ENCODE measurements at regions of chr1 and their contacts with region 1.

Region 1: DNA sequence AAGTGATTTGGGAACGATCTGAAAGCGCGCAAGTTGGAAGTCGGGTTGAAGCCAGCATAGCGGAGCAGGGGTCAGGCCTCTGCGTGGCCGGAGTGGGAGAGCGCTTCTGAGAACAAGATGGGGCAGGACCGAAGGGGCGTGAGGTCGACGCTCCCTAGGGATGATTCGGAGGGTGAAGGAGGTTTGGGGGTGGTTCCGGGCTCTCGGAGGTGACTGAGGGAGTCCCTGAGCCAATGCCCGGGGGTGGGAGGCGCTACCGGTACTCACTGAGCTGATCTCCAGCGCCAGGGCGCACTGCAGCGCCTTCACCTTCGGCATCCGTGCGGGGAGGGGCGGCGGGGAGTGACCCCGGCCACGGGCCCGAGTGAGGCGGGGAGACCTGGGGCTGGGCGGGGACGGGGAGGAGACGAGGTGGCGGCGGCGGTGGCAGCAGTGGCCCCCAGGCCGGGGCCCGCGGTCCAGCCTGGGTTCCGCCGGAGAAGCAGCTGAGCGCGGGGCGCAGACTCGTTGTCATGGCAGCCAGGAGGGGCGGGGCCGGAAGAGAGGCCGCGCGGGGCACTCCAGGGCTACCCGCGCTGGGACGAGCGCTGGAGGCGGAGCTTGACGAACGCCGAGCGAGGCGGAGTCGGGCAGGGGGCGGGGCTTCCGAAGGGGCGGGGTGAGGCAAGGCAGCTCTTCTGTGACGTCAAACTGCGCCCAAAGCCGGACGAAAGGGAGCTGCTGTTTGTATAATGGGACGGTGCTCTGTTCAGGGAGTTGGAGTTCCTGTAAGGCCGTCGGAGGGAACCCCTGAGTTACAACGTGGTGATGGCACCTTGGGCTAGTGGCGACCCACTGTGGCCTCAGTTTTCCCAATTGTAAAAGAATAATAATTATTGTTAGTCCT is at the start of gene SPATA6:
- DNase-seq: peak; percentile 99
- H3K4me3 ChIP-seq: peak within 1 kb of the TSS; percentile 70 to 95 (median 84)
- H3K27ac ChIP-seq: peak within 1 kb of the TSS; percentile 89 to 96 (median 96)
- H3K4me1 ChIP-seq: peaks cover 0 to 29% (median 22%) of the 10 kb centered on the region in 4 donors
- H3K27me3 ChIP-seq: no peaks in the 10 kb centered on the region
- CTCF ChIP-seq: no peak
- EP300 ChIP-seq: no peak
- POLR2A ChIP-seq: peak; percentile 63 to 79
- total RNA-seq, gene SPATA6: 17.6 to 31.4 (median 19.3) TPM

Region 2: GRCh38 chr1:48773133-48773532 is 301.2 kb after region 1 on chr1:
- intact Hi-C with region 1: loop called (anchors 5 kb)
- DNase-seq: no peak
- H3K4me3 ChIP-seq: no peak overlapping the region
- H3K27ac ChIP-seq: no peak overlapping the region
- H3K4me1 ChIP-seq: peaks cover 0 to 78% (median 49%) of the 10 kb centered on the region in 4 donors
- H3K27me3 ChIP-seq: no peaks in the 10 kb centered on the region
- CTCF ChIP-seq: no peak
- EP300 ChIP-seq: no peak
- POLR2A ChIP-seq: no peak

Region 3: DNA sequence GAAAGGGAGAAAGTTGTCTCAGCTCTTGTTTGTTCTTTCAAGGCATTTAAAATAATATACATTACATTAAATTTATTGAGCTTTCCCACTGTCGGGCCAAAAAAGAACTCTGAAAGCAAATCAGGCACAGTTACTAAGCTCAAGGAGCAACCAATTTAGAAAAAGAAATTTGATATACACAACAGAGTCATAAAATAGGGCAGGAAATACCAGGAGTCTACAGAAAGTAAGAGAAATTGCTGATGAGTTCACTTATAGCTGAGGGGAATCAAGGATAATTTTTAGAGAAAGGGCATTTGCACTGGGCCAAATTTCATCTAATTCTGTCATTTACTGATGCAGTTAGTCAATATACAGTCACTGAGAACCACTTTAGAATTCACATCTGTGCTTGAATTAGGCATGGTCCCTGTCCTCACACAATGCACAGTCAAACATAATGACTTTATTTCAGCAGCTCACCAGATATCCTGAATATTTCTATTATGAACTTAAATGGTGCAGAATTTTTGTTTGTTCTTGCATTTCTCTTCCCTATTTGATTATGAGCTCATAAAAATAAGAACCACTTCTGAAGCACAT is 554.4 kb after region 1 on chr1:
- intact Hi-C with region 1: no loop called
- DNase-seq: no peak
- H3K4me3 ChIP-seq: no peak overlapping the region
- H3K27ac ChIP-seq: no peak overlapping the region
- H3K4me1 ChIP-seq: no peaks in the 10 kb centered on the region
- H3K27me3 ChIP-seq: no peaks in the 10 kb centered on the region
- CTCF ChIP-seq: no peak
- EP300 ChIP-seq: no peak
- POLR2A ChIP-seq: no peak